ENCODE measurements at regions of chr1 and their contacts with region 1.

Region 1: GRCh38 chr1:156625436-156626078 is 6.3 kb downstream of the HAPLN2 start:
- DNase-seq: no peak
- H3K4me3 ChIP-seq: no peak overlapping the region
- CTCF ChIP-seq: peak; percentile 74

Region 2: GRCh38 chr1:156601122-156601830 is 24.3 kb before region 1 on chr1 and contains the start of gene GPATCH4:
- CTCF ChIA-PET with region 1: interaction called, 18 read pairs
- POLR2A ChIA-PET with region 1: no interaction called
- DNase-seq: peak; percentile 53
- H3K4me3 ChIP-seq: peak within 1 kb of the TSS; percentile 89
- CTCF ChIP-seq: no peak

Region 3: GRCh38 chr1:156608036-156608674 is 17.4 kb before region 1 on chr1:
- CTCF ChIA-PET with region 1: interaction called, 60 read pairs
- POLR2A ChIA-PET with region 1: no interaction called
- DNase-seq: no peak
- H3K4me3 ChIP-seq: no peak overlapping the region
- CTCF ChIP-seq: peak; percentile 82

Region 4: DNA sequence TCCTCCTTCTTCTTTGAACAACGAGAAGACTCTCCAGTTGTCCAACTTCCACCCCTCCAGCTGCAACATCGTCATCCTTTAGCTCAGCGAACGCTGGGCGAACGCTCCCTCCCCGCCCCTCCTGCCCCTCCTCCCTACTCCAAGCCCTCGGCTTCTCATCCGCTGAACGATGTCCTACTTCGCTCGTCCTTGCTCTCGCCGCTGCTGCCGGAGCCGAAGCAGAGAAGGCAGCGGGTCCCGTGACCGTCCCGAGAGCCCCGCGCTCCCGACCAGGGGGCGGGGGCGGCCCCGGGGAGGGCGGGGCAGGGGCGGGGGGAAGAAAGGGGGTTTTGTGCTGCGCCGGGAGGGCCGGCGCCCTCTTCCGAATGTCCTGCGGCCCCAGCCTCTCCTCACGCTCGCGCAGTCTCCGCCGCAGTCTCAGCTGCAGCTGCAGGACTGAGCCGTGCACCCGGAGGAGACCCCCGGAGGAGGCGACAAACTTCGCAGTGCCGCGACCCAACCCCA is 16.3 kb after region 1 on chr1 and contains the start of gene BCAN:
- CTCF ChIA-PET with region 1: interaction called, 142 read pairs
- POLR2A ChIA-PET with region 1: no interaction called
- DNase-seq: no peak
- H3K4me3 ChIP-seq: peak within 1 kb of the TSS; percentile 20; the same call in 1 of the 2 replicates
- CTCF ChIP-seq: no peak

Region 5: DNA sequence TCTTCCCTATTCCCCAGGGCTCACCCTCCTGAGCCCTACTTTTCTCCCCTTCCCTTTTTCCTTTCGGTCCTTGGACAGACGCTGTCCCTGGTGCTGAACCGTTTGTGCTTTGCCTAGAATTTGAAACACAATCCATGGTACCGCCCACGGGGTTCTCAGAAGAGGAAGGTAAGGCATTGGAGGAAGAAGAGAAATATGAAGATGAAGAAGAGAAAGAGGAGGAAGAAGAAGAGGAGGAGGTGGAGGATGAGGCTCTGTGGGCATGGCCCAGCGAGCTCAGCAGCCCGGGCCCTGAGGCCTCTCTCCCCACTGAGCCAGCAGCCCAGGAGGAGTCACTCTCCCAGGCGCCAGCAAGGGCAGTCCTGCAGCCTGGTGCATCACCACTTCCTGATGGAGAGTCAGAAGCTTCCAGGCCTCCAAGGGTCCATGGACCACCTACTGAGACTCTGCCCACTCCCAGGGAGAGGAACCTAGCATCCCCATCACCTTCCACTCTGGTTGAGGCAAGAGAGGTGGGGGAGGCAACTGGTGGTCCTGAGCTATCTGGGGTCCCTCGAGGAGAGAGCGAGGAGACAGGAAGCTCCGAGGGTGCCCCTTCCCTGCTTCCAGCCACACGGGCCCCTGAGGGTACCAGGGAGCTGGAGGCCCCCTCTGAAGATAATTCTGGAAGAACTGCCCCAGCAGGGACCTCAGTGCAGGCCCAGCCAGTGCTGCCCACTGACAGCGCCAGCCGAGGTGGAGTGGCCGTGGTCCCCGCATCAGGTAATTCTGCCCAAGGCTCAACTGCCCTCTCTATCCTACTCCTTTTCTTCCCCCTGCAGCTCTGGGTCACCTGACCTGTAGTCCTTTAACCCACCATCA is 26.8 kb after region 1 on chr1:
- CTCF ChIA-PET with region 1: interaction called, 409 read pairs
- POLR2A ChIA-PET with region 1: interaction called, 3 read pairs
- DNase-seq: no peak
- H3K4me3 ChIP-seq: no peak overlapping the region
- CTCF ChIP-seq: no peak

Region 6: GRCh38 chr1:156705918-156706656 is 80.5 kb after region 1 on chr1:
- CTCF ChIA-PET with region 1: interaction called, 11 read pairs
- POLR2A ChIA-PET with region 1: no interaction called
- DNase-seq: no peak
- H3K4me3 ChIP-seq: peak overlapping the region; percentile 55
- CTCF ChIP-seq: peak; percentile 88

Region 7: DNA sequence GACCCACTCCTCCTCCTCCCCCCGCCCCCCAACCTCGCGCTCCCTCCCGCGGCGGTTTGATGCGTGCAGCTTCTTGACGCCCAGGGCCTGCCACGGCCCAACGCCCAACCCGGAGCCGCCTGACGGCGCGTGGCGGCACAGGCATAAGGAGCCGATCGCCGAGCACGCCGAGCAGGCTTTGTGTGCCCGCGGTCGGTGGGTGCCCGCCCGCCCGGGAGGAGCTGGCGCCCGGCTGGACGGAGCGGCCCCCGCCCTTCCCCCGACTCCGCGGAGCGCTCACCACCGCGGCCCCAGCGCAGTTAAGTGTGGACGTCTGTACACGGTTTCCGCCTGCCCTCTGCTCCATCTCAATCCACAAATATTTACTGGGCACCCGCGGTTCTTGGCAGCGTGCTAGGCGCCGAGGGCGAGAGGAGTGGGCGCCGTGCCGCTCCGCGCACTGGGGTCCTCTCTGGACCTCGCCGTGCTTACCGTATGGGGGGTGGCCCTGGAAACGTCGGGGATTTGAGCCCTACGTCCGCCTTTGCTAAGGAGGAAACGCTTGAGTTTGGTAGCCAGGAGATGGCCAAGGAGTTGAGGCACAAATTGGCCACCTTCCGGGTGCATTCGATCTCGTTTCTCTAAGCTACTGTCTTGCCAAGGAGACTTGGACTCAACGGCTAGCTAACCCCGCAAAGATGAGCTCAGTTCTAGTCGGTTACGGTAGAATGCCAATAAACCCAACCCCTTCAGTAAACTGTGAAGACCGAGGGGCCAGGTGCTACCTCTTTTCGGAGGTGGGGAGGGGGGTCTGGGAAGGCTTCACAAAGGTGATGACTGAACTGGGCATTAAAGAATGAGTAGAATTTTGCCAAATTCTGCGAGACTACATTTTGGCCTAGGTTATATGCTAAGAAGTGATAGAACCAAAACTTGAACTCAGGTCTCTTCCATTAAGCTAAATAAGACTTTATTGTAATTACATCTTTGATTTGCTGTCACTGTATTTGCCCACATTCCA is 126.5 kb after region 1 on chr1:
- CTCF ChIA-PET with region 1: no interaction called
- POLR2A ChIA-PET with region 1: no interaction called
- DNase-seq: peak; percentile 72
- H3K4me3 ChIP-seq: peak overlapping the region; percentile 96
- CTCF ChIP-seq: peak; percentile 39

Region 8: DNA sequence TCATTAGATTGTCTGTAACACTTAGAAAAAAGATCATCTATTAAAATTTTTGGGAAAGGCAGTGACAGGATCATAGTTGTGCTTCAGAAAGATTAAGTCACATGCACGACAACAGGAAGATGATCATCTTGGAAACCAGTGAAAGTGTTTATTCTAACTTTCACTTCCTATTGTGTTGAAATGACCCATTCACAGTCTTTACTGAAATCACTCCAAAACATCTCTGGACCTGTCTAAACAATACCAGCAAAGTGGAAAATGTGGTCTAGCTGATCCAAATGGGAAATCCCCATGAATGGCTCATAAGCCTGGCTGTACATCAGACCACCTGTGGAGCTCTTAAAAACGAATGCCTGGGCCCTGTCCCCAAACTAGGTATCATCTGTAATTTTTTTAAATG is 623.8 kb after region 1 on chr1:
- CTCF ChIA-PET with region 1: no interaction called
- POLR2A ChIA-PET with region 1: no interaction called
- DNase-seq: no peak
- H3K4me3 ChIP-seq: no peak overlapping the region
- CTCF ChIP-seq: no peak

Measured in AG04449 (cell line).